ENCODE measurements at regions of chr3 and their contacts with region 1.

Region 1: GRCh38 chr3:124032648-124033359 is 40.9 kb upstream of the ROPN1 start:
- DNase-seq: peak; percentile 93

Region 2: GRCh38 chr3:123993818-123994217 is 39.0 kb before region 1 on chr3:
- intact Hi-C with region 1: no loop called
- DNase-seq: no peak

Region 3: DNA sequence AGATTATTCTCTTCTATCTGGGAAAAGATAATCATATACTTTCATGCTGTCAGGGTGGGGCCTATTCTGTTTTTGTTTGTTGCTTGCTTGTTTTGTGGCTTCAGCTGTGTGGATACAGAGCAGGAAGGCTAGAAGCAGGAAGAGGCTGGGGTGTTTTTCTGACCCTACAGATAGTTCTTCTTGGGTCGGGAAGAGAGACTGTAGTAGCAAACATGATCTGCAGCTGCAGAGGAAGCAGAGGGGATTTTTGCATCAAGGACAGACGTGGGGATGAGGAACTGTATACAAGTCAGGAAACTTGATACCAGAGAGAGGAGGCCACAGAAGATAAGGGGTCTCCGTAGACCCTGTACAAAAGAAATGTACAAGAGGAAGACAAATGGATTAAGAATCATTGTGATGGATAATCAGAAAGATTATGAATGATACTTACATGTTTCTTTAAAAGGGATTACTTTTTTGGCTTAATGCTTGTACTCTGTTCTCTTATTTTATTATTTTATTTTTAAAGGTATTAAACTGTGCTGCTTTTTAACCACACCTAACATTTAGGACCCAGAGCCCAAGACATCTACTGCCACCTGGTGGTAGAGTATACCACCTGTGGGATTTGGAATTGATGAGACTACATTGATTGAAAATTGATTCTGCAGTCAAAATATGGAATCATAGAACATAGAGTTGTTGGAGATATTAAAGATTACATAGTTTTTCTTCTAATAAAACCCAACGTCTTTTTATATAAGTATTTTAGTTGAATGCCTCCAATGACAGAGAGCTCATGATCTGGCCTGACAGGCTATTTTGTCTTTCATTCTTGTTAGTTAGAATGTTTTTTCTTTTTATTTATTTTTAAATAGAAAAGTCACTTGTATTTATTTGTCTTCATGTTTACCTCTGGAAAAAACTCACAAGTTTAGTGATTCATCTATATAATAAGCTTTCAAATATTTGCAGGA is 46.4 kb after region 1 on chr3:
- intact Hi-C with region 1: loop called (anchors 2 kb)
- DNase-seq: no peak

Region 4: DNA sequence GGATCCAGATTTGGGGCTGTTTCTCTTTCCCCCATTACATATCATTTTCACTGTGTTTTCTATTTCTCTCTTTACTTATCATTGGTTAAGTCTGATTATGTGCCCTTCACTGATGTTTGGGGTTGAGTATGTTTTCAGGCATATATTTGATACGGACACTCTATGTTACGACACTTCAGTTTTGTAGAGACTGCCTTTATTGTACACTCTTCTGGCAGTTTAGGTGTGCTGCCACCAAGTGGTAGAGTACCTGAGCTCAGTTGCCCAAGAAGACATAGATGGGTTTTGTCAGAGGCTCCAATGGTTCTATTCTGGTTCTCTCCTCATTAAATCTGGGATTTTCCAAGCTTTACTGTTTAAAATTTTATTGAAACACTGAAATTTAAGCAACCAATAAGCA is 214.1 kb after region 1 on chr3:
- intact Hi-C with region 1: loop called (anchors 2 kb)
- DNase-seq: no peak

Region 5: DNA sequence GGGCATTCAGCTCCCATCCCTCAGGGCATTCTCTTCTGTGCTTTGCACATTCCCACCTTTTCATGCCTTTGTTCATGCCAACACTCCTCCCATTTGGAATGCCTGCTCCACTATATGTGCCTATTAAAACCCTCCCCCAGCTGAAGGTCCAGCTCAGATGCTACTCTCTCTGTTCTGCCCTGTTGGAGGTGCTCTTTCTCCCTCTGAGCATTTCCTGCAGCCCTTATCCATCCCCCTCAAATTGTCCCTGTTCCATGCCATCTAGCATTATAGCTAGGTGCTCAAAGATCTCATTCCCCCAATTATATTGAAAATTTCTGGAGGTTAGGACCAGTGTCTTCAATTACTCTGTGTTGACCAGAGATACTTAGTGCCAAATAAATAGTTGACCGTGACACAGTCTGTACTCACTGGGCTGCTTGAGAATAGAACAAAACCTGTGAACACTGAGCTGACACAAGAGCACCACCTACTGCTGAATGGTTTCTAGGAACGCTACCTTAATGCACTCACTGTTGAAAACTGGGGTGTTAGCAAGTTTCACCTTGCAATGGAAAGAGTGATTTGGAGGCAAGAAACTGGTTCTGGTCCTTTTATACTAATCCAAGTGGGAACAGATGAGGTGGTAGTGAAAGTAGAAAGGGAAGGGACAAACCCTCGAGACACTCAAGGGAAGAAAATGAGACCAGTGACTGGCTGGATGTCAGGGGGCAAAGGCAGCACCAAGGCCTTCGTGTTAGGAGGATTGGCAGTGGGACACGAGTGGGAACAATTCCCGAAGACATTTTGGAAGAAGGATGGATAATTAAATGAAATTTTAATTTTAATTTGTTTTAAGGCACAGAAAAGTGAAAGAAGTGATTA is 248.9 kb after region 1 on chr3:
- intact Hi-C with region 1: loop called (anchors 2 kb)
- DNase-seq: no peak

Region 6: DNA sequence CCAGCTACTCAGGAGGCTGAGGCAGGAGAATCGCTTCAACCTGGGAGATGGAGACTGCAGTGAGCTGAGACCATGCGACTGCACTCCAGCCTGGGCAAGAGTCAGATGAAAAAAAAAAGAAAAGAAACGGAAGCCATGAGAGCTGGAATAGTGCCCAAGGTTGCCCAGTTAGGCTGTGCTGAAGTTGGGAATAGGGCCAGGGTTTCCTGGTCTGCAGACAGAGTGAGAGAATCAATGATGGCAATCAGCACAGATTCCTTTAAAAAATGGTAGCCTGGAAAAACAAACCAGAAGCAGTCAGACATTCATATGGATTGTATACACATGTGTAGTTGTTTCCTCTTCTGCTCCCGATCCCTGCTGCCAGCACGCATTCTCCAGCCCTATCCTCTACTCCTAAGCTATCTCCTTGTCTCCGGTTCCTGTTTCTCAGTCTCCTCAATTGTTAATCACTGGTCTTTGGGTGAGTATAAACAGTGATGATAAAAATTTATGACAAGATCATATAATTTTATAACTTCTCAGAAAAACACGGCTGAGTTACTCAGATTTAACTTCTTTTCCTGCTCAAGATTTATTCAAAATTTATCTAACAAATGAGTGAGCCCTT is 381.3 kb after region 1 on chr3:
- intact Hi-C with region 1: no loop called
- DNase-seq: no peak

Region 7: GRCh38 chr3:124540550-124541211 is 507.9 kb after region 1 on chr3:
- intact Hi-C with region 1: loop called (anchors 10 kb)
- DNase-seq: no peak

Measured in cardiac septum (tissue), 1 donor.